HEK293T (cell line): ENCODE measurements at regions of chr16 and their contacts with region 1.

Region 1: DNA sequence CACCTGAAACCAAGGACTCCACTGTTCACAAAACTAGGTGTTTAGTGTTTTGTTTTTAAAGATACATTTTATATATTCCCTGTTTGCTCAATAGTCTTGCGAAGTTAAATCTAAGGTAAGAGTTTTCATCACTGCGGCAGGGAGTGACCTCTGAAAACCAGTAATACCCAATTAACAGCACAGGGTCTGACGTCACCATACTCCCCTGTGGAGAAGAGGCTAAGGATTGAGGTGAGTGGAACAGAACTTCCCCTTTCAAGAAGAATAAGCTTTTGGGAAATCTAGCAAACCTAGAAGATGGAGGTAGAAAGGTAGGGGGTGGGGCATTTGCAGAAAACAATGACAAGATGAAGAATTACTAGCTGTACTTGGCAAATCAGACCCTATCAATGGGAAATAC is 120.7 kb downstream of the CDH8 start:
- DNase-seq: no peak

Region 2: DNA sequence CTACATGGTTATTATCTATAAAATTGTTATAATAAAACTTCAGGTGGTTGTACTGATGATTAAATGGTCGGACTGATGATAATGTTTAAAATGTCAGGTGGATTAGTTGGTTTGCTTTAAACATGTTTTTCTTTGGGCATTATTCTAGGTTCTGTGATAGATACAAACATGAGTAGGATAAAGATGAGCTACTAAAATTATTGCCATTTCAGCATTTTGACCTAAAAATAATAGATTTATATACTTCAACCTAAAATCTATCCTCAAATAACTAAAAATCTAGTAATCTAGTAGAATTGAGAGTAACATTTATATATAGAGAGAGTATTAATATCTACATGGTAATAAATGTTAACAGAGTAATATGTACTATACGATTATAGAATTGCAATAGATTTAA is 362.4 kb after region 1 on chr16:
- CTCF ChIA-PET with region 1: interaction called, 10 read pairs
- POLR2A ChIA-PET with region 1: no interaction called
- DNase-seq: no peak